Calu3 (cell line): ENCODE measurements at regions of chr6 and their contacts with region 1.

Region 1: GRCh38 chr6:145633981-145634627 is 101.2 kb downstream of the EPM2A start:
- DNase-seq: peak; percentile 79
- H3K4me3 Mint-ChIP-seq: no peak overlapping the region
- H3K27ac Mint-ChIP-seq: no peak overlapping the region
- H3K4me1 Mint-ChIP-seq: peaks cover 10% of the 10 kb centered on the region
- H3K27me3 Mint-ChIP-seq: no peaks in the 10 kb centered on the region
- CTCF ChIP-seq: peak; percentile 81

Region 2: GRCh38 chr6:145214570-145214969 is 419.5 kb before region 1 on chr6:
- CTCF ChIA-PET with region 1: no interaction called
- intact Hi-C with region 1: loop called (anchors 5 kb)
- DNase-seq: peak; percentile 8
- H3K4me3 Mint-ChIP-seq: no peak overlapping the region
- H3K27ac Mint-ChIP-seq: no peak overlapping the region
- H3K4me1 Mint-ChIP-seq: no peaks in the 10 kb centered on the region
- H3K27me3 Mint-ChIP-seq: no peaks in the 10 kb centered on the region
- CTCF ChIP-seq: no peak

Region 3: DNA sequence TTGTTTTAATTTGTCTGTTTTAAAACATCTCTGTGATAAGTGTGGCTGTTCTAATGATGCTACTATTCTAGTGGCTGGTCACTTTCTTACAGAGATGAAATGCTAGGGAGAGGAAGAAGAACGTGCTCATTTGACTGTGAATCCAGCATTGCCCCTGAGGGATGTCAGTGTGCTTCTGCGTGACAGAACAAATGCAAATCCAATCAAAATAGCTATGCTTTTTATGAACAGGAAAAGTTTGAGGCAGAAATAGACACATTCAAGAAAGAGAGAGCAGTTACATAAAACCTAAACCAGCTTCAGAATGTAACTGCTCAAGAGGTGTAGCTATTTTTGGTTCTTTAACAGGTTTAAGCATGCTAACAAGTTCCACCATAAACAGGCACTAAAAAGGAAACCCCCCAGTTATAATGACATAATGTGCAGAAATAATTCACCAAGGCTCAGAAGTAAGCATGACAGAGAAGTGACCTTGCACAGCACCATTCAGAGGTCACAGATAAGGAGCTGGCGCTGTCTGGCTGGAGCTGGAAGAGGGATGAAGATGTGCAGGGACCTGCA is 284.1 kb before region 1 on chr6:
- CTCF ChIA-PET with region 1: interaction called, 3 read pairs
- intact Hi-C with region 1: loop called (anchors 10 kb)
- DNase-seq: no peak
- H3K4me3 Mint-ChIP-seq: no peak overlapping the region
- H3K27ac Mint-ChIP-seq: no peak overlapping the region
- H3K4me1 Mint-ChIP-seq: no peaks in the 10 kb centered on the region
- H3K27me3 Mint-ChIP-seq: no peaks in the 10 kb centered on the region
- CTCF ChIP-seq: no peak

Region 4: DNA sequence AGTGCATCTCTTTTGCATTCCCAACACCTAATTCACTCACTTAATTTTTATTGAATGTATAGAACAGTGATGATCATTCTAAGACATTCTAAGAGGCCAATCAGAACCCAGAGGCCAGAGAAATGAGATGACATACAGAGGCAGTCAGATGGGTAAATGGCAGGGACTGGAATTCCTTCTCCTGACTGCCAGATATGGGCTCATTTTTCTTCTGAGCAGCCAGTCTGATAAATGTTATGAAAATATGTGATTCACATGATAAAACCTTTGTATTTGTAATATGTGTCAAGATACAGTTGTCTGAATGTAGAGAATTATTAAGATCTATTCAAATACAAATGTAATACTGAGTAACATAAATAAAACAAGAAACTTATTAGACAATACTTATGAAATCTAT is 176.5 kb before region 1 on chr6:
- CTCF ChIA-PET with region 1: no interaction called
- intact Hi-C with region 1: no loop called
- DNase-seq: no peak
- H3K4me3 Mint-ChIP-seq: no peak overlapping the region
- H3K27ac Mint-ChIP-seq: no peak overlapping the region
- H3K4me1 Mint-ChIP-seq: no peaks in the 10 kb centered on the region
- H3K27me3 Mint-ChIP-seq: no peaks in the 10 kb centered on the region
- CTCF ChIP-seq: no peak

Region 5: DNA sequence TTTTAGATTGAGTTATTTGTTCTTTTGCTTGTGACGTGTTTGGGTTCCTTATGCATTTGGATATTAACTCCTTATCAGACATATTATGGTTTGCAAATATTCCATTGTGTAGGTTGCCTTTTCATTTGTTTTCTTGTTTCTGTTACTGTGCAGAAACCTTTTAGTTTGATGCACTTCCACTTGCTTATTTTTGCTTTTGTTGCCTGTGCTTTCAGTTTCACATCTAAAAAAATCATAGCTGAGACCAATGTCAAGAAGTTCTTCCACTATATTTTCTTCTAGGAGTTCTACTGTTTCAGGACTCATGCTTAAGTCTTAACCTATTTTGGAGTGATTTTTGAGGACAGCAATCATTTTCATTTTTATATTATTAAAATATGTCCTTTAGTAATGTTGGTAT is 12.3 kb before region 1 on chr6:
- CTCF ChIA-PET with region 1: no interaction called
- intact Hi-C with region 1: no loop called
- DNase-seq: no peak
- H3K4me3 Mint-ChIP-seq: no peak overlapping the region
- H3K27ac Mint-ChIP-seq: no peak overlapping the region
- H3K4me1 Mint-ChIP-seq: no peaks in the 10 kb centered on the region
- H3K27me3 Mint-ChIP-seq: no peaks in the 10 kb centered on the region
- CTCF ChIP-seq: no peak